ENCODE measurements at regions of chr16 and their contacts with region 1.

Region 1: GRCh38 chr16:2231016-2231931 is 5.0 kb upstream of the DNASE1L2 start:
- DNase-seq: no peak
- ATAC-seq: no peak
- H3K4me3 ChIP-seq: no peak overlapping the region
- H3K27ac ChIP-seq: no peak overlapping the region
- H3K4me1 ChIP-seq: peaks cover 3 to 58% of the 10 kb centered on the region in 2 experiments; a peak in 3 of 5 replicates
- H3K27me3 ChIP-seq: no peaks in the 10 kb centered on the region
- CTCF ChIP-seq: no peak
- EP300 ChIP-seq: no peak
- POLR2A ChIP-seq: no peak
- RAD21 ChIP-seq: no peak

Region 2: GRCh38 chr16:2243031-2243528 is 11.8 kb after region 1 on chr16:
- CTCF ChIA-PET with region 1: no interaction called
- POLR2A ChIA-PET with region 1: interaction called, 19 read pairs
- in situ Hi-C with region 1: no loop called
- intact Hi-C with region 1: no loop called
- DNase-seq: peak in 1 of 4 experiments; percentile 32
- ATAC-seq: no peak
- H3K4me3 ChIP-seq: no peak overlapping the region
- H3K27ac ChIP-seq: no peak overlapping the region
- H3K4me1 ChIP-seq: peaks cover 0 to 47% of the 10 kb centered on the region in 2 experiments; a peak in 2 of 5 replicates
- H3K27me3 ChIP-seq: no peaks in the 10 kb centered on the region
- CTCF ChIP-seq: peak in 2 of 3 experiments; percentile 26 to 59; a peak in 4 of 6 replicates
- EP300 ChIP-seq: no peak
- POLR2A ChIP-seq: no peak
- RAD21 ChIP-seq: no peak

Region 3: DNA sequence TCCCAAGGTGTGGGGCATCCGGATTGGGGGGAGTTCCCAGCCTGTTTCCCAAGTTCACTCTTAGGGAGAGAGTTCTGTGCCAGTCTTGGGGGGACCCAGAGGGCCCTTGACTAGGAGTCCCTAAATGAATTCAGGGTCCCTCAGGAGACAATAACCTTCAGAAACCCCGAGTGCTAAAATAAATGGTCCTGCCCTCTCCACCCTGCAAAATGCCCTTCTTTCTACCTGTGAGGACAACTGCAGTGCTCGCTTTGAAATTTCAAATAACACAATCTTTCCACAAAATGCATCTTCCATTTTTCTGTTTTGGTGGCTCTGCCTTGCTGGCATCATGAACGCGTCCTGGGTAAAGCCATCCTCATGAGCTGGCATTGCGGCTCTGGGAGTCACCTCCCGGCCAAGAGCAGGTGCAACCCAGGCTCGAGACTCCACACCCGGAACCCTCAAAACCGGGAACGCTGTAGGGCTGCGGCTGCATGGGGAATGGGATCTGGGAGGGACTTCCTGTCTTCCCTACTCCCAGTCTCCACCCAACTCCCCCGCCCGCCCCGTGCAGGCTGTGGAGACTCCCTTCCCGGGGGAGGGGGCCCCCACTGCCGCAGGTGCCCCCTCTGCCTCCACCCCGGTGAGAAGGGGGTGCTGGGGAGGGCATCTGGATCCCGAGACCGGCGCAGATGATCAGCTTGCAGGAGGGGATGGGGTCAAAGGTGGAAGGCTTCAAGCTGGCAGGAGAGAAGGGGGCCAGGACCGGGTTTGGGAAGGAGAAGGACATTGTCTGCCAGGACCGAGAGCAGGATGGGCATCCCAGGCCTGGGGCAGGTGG is 881.0 kb after region 1 on chr16 and contains the start of gene ZNF205:
- CTCF ChIA-PET with region 1: no interaction called
- POLR2A ChIA-PET with region 1: no interaction called
- in situ Hi-C with region 1: no loop called
- intact Hi-C with region 1: no loop called
- DNase-seq: peak; percentile 84 to 90 (median 87)
- ATAC-seq: peak; percentile 91
- H3K4me3 ChIP-seq: peak within 1 kb of the TSS; percentile 87
- H3K27ac ChIP-seq: peak within 1 kb of the TSS; percentile 25; the same call in 2 of the 3 replicates
- H3K4me1 ChIP-seq: peaks cover 9 to 34% of the 10 kb centered on the region in 2 experiments; a peak in 4 of 5 replicates
- H3K27me3 ChIP-seq: no peaks in the 10 kb centered on the region
- CTCF ChIP-seq: 0 out of 6 replicates have a peak, but pooled peaks of 1 of the 3 experiments have one; percentile 0
- EP300 ChIP-seq: no peak
- POLR2A ChIP-seq: peak; percentile 50; the same call in 1 of the 2 replicates
- RAD21 ChIP-seq: peak in 1 of 2 experiments; percentile 24; a peak in 1 of 4 replicates
- polyA plus RNA-seq, gene ZNF205: not detected

Measured in K562 (cell line).